ENCODE measurements at regions of chr9 and their contacts with region 1.

Region 1: GRCh38 chr9:22119537-22120158 is 110.5 kb upstream of the CDKN2B start:
- DNase-seq: peak in 3 of 9 donors; percentile 4 to 28 (median 27)
- ATAC-seq: peak; percentile 70
- H3K4me3 ChIP-seq: no peak overlapping the region
- H3K4me3 Mint-ChIP-seq: no peak overlapping the region
- H3K27ac ChIP-seq: no peak overlapping the region
- H3K27ac Mint-ChIP-seq: no peak overlapping the region
- H3K4me1 ChIP-seq: no peaks in the 10 kb centered on the region
- H3K4me1 Mint-ChIP-seq: peaks cover 0 to 20% (median 0%) of the 10 kb centered on the region in 7 donors
- H3K27me3 ChIP-seq: no peaks in the 10 kb centered on the region
- H3K27me3 Mint-ChIP-seq: peaks cover 5 to 71% (median 10%) of the 10 kb centered on the region in 5 donors

Region 2: GRCh38 chr9:21974548-21975409 is 144.9 kb before region 1 on chr9:
- CTCF ChIA-PET with region 1: no interaction called
- POLR2A ChIA-PET with region 1: no interaction called
- intact Hi-C with region 1: loop called in 1 of 2 experiments (anchors 2 kb)
- DNase-seq: peak in 3 of 9 donors; percentile 31 to 46 (median 41)
- ATAC-seq: peak; percentile 68
- H3K4me3 ChIP-seq: peak overlapping the region; percentile 43
- H3K4me3 Mint-ChIP-seq: peak overlapping the region; percentile 74 to 90 (median 82)
- H3K27ac ChIP-seq: no peak overlapping the region
- H3K27ac Mint-ChIP-seq: peak overlapping the region in 3 of 9 donors; percentile 26 to 64 (median 58)
- H3K4me1 ChIP-seq: peaks cover 13 to 17% of the 10 kb centered on the region in 2 donors
- H3K4me1 Mint-ChIP-seq: peaks cover 0 to 31% (median 21%) of the 10 kb centered on the region in 7 donors
- H3K27me3 ChIP-seq: peaks cover 57 to 75% of the 10 kb centered on the region in 2 donors
- H3K27me3 Mint-ChIP-seq: peaks cover 92 to 97% (median 93%) of the 10 kb centered on the region in 5 donors

Region 3: DNA sequence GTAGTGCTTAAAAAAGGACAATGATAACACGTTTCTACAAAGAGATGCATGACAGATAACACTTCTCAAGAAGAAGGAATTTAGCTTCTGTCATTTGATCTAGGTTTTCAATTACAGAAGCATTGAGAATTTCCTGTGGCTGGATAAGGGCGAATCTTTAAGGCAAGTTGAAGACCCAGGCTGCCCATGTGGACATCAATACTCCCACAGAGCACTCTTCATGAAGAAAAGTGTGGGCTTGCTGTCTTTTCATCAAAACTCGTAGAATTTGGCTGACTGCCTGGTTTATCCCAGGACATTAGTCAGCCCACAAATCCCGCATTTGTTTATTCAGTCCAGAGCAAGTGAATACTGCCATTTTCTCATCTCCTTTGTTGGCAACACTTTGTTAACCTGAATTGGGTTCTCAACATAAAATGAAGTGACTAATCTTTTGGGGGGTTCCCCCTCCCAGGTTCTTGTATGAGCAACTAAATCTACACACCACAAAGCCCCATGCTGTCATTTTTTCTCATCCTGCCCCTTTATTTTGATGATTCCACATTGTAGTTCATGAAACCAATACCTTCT is 67.2 kb before region 1 on chr9:
- CTCF ChIA-PET with region 1: no interaction called
- POLR2A ChIA-PET with region 1: no interaction called
- intact Hi-C with region 1: loop called in 1 of 2 experiments (anchors 2 kb)
- DNase-seq: peak in 2 of 9 donors; percentile 10 to 34
- ATAC-seq: peak; percentile 49
- H3K4me3 ChIP-seq: no peak overlapping the region
- H3K4me3 Mint-ChIP-seq: peak overlapping the region in 2 of 10 donors; percentile 7 to 28
- H3K27ac ChIP-seq: no peak overlapping the region
- H3K27ac Mint-ChIP-seq: peak overlapping the region in 1 of 9 donors; percentile 70
- H3K4me1 ChIP-seq: peaks cover 14 to 23% of the 10 kb centered on the region in 2 donors
- H3K4me1 Mint-ChIP-seq: peaks cover 11 to 37% (median 29%) of the 10 kb centered on the region in 7 donors
- H3K27me3 ChIP-seq: no peaks in the 10 kb centered on the region
- H3K27me3 Mint-ChIP-seq: peaks cover 0 to 23% (median 0%) of the 10 kb centered on the region in 5 donors

Region 4: DNA sequence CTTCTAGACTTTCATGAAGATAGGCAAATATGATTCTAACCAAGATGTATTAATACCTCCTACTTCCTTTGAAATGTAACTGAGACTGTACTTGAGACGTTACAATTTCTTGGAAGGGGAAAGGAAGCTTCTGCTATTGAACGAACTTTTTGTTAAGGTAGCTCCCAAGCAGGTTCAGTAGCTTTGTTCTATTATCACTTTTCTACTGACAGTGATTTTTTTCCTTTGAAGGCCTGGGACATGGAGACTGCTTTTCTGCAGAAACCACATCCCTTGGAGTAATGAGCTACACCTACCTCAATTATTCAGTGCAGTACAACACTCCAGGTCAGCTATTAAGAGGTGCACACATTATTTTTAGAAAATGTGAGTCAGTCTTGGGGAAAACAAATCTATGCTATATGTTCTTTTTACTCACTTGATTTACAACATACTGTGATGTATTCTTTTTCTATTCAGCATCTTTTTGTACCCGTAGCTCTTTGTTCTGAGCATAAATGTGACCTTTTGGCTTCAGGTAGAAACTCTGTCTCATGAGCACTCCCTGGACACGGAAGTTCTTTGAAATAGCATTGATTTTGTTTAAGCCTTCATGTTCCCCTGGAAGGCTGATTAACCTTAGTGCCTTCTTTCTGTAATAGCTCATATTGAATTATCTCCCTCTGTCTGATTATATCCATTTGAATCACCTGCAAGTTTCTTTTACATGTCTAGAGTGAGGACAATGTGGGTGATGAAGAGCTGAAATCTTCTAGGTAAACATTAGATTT is 54.0 kb before region 1 on chr9:
- CTCF ChIA-PET with region 1: no interaction called
- POLR2A ChIA-PET with region 1: no interaction called
- intact Hi-C with region 1: no loop called
- DNase-seq: peak in 2 of 9 donors; percentile 16 to 18
- ATAC-seq: peak; percentile 44
- H3K4me3 ChIP-seq: no peak overlapping the region
- H3K4me3 Mint-ChIP-seq: peak overlapping the region in 6 of 10 donors; percentile 2 to 55 (median 24)
- H3K27ac ChIP-seq: no peak overlapping the region
- H3K27ac Mint-ChIP-seq: peak overlapping the region in 5 of 9 donors; percentile 17 to 70 (median 56)
- H3K4me1 ChIP-seq: peaks cover 0 to 9% of the 10 kb centered on the region in 2 donors
- H3K4me1 Mint-ChIP-seq: peaks cover 16 to 46% (median 28%) of the 10 kb centered on the region in 7 donors
- H3K27me3 ChIP-seq: no peaks in the 10 kb centered on the region
- H3K27me3 Mint-ChIP-seq: peaks cover 0 to 40% (median 0%) of the 10 kb centered on the region in 5 donors

Region 5: DNA sequence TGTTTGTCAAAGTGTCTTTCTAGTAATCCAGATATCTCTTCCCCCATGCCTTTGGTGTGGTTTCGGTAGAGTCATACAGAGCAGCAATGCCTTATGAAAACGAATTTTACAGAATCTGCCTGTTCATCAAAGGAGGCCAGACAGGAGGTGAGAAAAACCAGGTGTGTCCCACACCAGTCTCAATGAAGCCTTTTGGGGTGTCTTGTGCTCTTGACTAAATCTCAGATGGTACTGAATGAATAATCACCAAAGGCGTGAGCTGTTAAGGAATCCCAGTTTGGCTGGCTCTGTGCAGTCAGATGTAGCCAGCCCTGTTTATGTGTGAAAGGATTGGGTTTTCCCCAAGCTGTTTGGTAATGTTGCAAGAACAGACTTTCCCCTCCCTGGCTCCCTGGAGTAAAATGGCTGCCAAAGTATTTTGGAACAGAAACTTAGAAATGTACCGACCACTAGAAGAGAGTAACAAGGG is 39.7 kb before region 1 on chr9:
- CTCF ChIA-PET with region 1: no interaction called
- POLR2A ChIA-PET with region 1: no interaction called
- intact Hi-C with region 1: loop called in 1 of 2 experiments (anchors 2 kb)
- DNase-seq: peak in 8 of 9 donors; percentile 10 to 67 (median 50)
- ATAC-seq: peak; percentile 90
- H3K4me3 ChIP-seq: no peak overlapping the region
- H3K4me3 Mint-ChIP-seq: peak overlapping the region in 9 of 10 donors; percentile 3 to 69 (median 43)
- H3K27ac ChIP-seq: no peak overlapping the region
- H3K27ac Mint-ChIP-seq: peak overlapping the region in 5 of 9 donors; percentile 6 to 83 (median 10)
- H3K4me1 ChIP-seq: peaks cover 13 to 14% of the 10 kb centered on the region in 2 donors
- H3K4me1 Mint-ChIP-seq: peaks cover 22 to 59% (median 33%) of the 10 kb centered on the region in 7 donors
- H3K27me3 ChIP-seq: no peaks in the 10 kb centered on the region
- H3K27me3 Mint-ChIP-seq: peaks cover 11 to 53% (median 12%) of the 10 kb centered on the region in 5 donors

Region 6: DNA sequence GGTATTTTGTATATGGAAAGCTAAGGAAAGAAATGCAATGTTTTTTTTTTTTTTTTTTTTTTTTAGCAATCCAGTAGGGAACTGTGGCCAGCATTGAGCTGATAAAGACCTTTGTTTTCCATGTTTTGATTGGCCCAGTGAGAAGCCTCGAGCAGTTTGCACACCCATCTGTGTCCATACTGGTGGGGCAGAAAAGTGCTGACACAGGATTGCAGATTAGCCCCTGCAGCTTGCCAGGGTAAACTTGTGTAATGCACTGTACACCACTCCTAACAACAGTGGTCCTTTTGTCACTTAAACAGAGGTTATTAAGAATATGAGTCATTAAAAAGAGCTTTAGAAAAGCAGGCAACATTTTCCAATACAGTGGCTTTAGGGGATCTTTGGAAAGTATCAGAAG is 22.3 kb after region 1 on chr9:
- CTCF ChIA-PET with region 1: no interaction called
- POLR2A ChIA-PET with region 1: no interaction called
- intact Hi-C with region 1: loop called in 1 of 2 experiments (anchors 1 kb)
- DNase-seq: no peak
- ATAC-seq: no peak
- H3K4me3 ChIP-seq: no peak overlapping the region
- H3K4me3 Mint-ChIP-seq: no peak overlapping the region
- H3K27ac ChIP-seq: no peak overlapping the region
- H3K27ac Mint-ChIP-seq: no peak overlapping the region
- H3K4me1 ChIP-seq: no peaks in the 10 kb centered on the region
- H3K4me1 Mint-ChIP-seq: peaks cover 0 to 3% (median 0%) of the 10 kb centered on the region in 7 donors
- H3K27me3 ChIP-seq: no peaks in the 10 kb centered on the region
- H3K27me3 Mint-ChIP-seq: peaks cover 0 to 60% (median 0%) of the 10 kb centered on the region in 5 donors

Region 7: DNA sequence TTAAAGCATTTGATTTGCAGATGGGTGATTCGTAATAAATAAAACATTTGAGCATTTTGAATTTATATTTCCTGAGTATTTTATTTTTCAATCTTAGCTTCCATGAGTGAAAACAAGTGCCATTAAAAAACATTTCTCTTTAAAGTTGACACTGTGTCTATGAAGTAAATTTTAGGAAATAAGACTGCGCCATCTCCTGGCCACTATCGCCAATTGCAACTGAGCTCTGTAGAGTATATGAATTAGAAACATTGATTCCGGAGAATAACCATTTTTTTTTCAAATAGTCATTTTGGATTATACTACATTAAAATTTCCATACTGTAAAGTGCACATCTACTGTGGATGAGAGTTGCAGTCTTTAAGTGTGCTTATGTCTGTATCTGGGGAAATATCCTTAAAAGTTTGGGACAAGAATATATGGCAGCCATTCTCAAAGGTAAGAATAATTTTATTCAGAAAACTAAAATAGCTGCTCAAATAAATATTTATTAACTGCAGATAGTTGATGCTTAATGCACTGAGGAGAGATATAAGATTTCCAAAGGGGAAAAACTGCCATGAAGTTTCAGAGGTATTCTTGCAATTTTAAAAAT is 332.9 kb after region 1 on chr9:
- CTCF ChIA-PET with region 1: no interaction called
- POLR2A ChIA-PET with region 1: interaction called, 3 read pairs
- intact Hi-C with region 1: loop called in 1 of 2 experiments (anchors 5 kb)
- DNase-seq: peak in 5 of 9 donors; percentile 8 to 31 (median 11)
- ATAC-seq: peak; percentile 70
- H3K4me3 ChIP-seq: no peak overlapping the region
- H3K4me3 Mint-ChIP-seq: no peak overlapping the region
- H3K27ac ChIP-seq: no peak overlapping the region
- H3K27ac Mint-ChIP-seq: no peak overlapping the region
- H3K4me1 ChIP-seq: no peaks in the 10 kb centered on the region
- H3K4me1 Mint-ChIP-seq: peaks cover 0 to 5% (median 2%) of the 10 kb centered on the region in 7 donors
- H3K27me3 ChIP-seq: peaks cover 6 to 10% of the 10 kb centered on the region in 2 donors
- H3K27me3 Mint-ChIP-seq: peaks cover 28 to 65% (median 37%) of the 10 kb centered on the region in 5 donors